ENCODE measurements at regions of chr1 and their contacts with region 1.

Region 1: GRCh38 chr1:225474986-225475820 is 47.4 kb upstream of the LBR start:
- DNase-seq: peak; percentile 53 to 74 (median 66)
- H3K4me3 ChIP-seq: no peak overlapping the region
- H3K4me3 Mint-ChIP-seq: no peak overlapping the region
- H3K27ac ChIP-seq: no peak overlapping the region
- H3K27ac Mint-ChIP-seq: peak overlapping the region in 4 of 8 donors; percentile 24 to 74 (median 60)
- H3K4me1 ChIP-seq: peaks cover 36% of the 10 kb centered on the region
- H3K4me1 Mint-ChIP-seq: peaks cover 37 to 48% (median 43%) of the 10 kb centered on the region in 3 donors
- H3K27me3 ChIP-seq: no peaks in the 10 kb centered on the region
- H3K27me3 Mint-ChIP-seq: no peaks in the 10 kb centered on the region

Region 2: DNA sequence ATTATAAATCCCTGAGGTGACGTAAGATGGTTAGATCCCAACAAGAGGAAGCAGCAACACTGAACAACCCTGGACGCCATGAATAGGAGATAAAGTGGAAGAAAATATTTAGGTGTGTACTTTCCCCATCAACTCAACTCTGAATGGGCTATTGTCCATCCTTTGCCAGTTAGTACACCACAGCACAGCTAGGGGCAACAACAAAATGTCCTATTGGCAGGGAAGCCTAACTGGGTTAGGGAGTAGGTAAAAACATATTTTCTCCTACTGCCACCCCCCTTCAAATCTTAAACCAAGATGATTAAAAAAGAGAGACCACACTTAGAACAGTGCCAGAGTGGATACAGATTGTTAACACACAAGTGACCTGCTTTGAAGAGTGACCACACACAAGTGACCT is 267.4 kb before region 1 on chr1:
- CTCF ChIA-PET with region 1: no interaction called
- POLR2A ChIA-PET with region 1: no interaction called
- DNase-seq: no peak
- H3K4me3 ChIP-seq: no peak overlapping the region
- H3K4me3 Mint-ChIP-seq: no peak overlapping the region
- H3K27ac ChIP-seq: no peak overlapping the region
- H3K27ac Mint-ChIP-seq: no peak overlapping the region
- H3K4me1 ChIP-seq: no peaks in the 10 kb centered on the region
- H3K4me1 Mint-ChIP-seq: no peaks in the 10 kb centered on the region
- H3K27me3 ChIP-seq: no peaks in the 10 kb centered on the region
- H3K27me3 Mint-ChIP-seq: peaks cover 16 to 47% of the 10 kb centered on the region in 2 donors

Region 3: GRCh38 chr1:225977937-225978748 is 502.9 kb after region 1 on chr1:
- CTCF ChIA-PET with region 1: interaction called, 21 read pairs
- POLR2A ChIA-PET with region 1: no interaction called
- DNase-seq: no peak
- H3K4me3 ChIP-seq: no peak overlapping the region
- H3K4me3 Mint-ChIP-seq: no peak overlapping the region
- H3K27ac ChIP-seq: no peak overlapping the region
- H3K27ac Mint-ChIP-seq: peak overlapping the region in 2 of 8 donors; percentile 36 to 43
- H3K4me1 ChIP-seq: no peaks in the 10 kb centered on the region
- H3K4me1 Mint-ChIP-seq: peaks cover 2 to 12% (median 5%) of the 10 kb centered on the region in 3 donors
- H3K27me3 ChIP-seq: no peaks in the 10 kb centered on the region
- H3K27me3 Mint-ChIP-seq: no peaks in the 10 kb centered on the region

Region 4: GRCh38 chr1:225987491-225988316 is 512.5 kb after region 1 on chr1:
- CTCF ChIA-PET with region 1: interaction called, 12 read pairs
- POLR2A ChIA-PET with region 1: no interaction called
- DNase-seq: peak in 1 of 5 donors; percentile 49
- H3K4me3 ChIP-seq: no peak overlapping the region
- H3K4me3 Mint-ChIP-seq: no peak overlapping the region
- H3K27ac ChIP-seq: no peak overlapping the region
- H3K27ac Mint-ChIP-seq: peak overlapping the region in 4 of 8 donors; percentile 23 to 86 (median 58)
- H3K4me1 ChIP-seq: peaks cover 15% of the 10 kb centered on the region
- H3K4me1 Mint-ChIP-seq: peaks cover 28 to 41% (median 39%) of the 10 kb centered on the region in 3 donors
- H3K27me3 ChIP-seq: no peaks in the 10 kb centered on the region
- H3K27me3 Mint-ChIP-seq: no peaks in the 10 kb centered on the region